Activated T-helper 2 cell treated with anti-CD3 and anti-CD28 coated beads, Interferon-gamma antibody, Interleukin-2, Interleukin-4, amounts not matched to agents 10 μg/mL and 5 μg/mL and 100 μg/mL, durations not matched to agents 14 hours and 24 hours and 36 hours (primary cell): ENCODE measurements at regions of chr6 and their contacts with region 1.

Region 1: DNA sequence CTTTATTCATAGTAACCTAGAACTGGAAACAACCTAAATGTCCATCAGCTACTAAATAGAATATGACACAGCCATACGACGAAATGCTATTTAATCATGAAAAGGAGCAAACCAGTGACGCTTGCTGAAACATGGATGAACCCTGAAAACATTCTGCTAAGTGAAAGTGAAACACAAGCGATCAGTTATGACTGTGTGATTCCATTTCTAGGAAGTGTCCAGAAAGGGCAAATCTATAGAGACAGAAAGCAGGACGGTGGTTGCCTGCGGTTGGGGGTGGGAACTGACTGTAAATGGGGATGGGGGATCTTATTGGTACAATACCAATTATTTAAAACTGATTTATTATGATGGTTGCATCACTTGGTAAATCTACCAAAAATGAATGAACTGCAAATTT is 126.8 kb downstream of the IPCEF1 start:
- DNase-seq: peak; percentile 45
- H3K4me3 Mint-ChIP-seq: peak overlapping the region; percentile 51
- H3K27ac Mint-ChIP-seq: peak overlapping the region; percentile 66
- H3K4me1 Mint-ChIP-seq: peaks cover 44% of the 10 kb centered on the region
- H3K27me3 Mint-ChIP-seq: no peaks in the 10 kb centered on the region

Region 2: GRCh38 chr6:154202339-154202738 is 27.4 kb before region 1 on chr6:
- intact Hi-C with region 1: no loop called
- DNase-seq: no peak
- H3K4me3 Mint-ChIP-seq: no peak overlapping the region
- H3K27ac Mint-ChIP-seq: no peak overlapping the region
- H3K4me1 Mint-ChIP-seq: peaks cover 1% of the 10 kb centered on the region
- H3K27me3 Mint-ChIP-seq: no peaks in the 10 kb centered on the region

Region 3: DNA sequence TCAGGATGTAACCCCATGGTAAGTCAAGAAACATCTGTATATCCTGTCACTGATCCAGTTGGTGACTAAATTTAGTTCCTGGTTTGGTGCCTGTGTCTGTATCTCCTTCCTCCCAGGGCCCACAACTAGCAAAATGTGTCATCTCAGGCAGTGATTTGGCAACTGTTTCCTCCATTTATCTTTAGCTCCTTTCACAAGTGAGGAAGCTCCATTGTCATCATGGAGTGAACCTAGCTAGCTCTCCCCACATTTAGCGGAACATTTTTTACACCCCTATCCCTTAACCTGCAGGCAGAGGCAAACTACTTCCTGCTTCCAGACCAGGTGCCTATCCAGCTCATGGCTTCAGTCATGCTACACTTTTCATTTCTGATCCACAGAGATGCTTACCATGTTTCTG is 27.3 kb after region 1 on chr6:
- intact Hi-C with region 1: no loop called
- DNase-seq: no peak
- H3K4me3 Mint-ChIP-seq: no peak overlapping the region
- H3K27ac Mint-ChIP-seq: no peak overlapping the region
- H3K4me1 Mint-ChIP-seq: peaks cover 25% of the 10 kb centered on the region
- H3K27me3 Mint-ChIP-seq: peaks cover 25% of the 10 kb centered on the region

Region 4: DNA sequence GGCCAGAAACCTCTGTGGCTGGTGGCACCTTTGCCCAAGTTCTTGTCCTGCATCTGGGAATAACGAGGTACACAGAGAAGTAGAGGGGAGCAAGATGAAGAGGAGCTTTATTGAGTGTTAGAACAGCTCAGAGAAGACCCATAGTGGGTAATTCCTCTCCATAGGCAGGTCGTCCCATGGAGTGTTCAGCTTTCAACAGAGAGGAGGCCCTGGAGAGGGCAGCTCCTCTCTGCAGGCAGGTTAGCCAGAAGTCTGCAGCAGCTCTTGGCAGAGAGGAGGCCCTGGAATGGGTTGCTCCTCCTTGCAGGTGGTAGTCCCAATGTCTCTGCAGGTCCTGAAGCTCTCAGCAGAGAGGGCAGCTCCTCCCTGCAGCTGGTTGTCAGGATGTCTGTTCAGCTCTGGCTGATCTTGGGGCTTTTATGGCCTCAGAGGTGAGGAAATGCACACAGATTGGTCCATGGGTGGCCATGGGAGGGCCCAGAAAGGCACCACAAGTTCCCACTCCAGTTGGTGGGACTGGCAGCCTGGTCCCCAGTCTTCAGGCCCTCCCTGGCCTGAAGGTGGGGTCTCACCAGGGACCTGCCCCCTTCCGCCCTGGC is 37.8 kb after region 1 on chr6:
- intact Hi-C with region 1: loop called (anchors 5 kb)
- DNase-seq: no peak
- H3K4me3 Mint-ChIP-seq: no peak overlapping the region
- H3K27ac Mint-ChIP-seq: no peak overlapping the region
- H3K4me1 Mint-ChIP-seq: peaks cover 9% of the 10 kb centered on the region
- H3K27me3 Mint-ChIP-seq: peaks cover 18% of the 10 kb centered on the region

Region 5: GRCh38 chr6:154457881-154458284 is 228.1 kb after region 1 on chr6:
- intact Hi-C with region 1: no loop called
- DNase-seq: no peak
- H3K4me3 Mint-ChIP-seq: no peak overlapping the region
- H3K27ac Mint-ChIP-seq: no peak overlapping the region
- H3K4me1 Mint-ChIP-seq: no peaks in the 10 kb centered on the region
- H3K27me3 Mint-ChIP-seq: peaks cover 9% of the 10 kb centered on the region